Testis (tissue), 5 donors: ENCODE measurements at regions of chr2 and their contacts with region 1.

Region 1: GRCh38 chr2:74715078-74715791 is 61.2 kb downstream of the SEMA4F start:
- DNase-seq: peak; percentile 92
- H3K4me3 ChIP-seq: peak overlapping the region; percentile 54 to 73
- H3K27ac ChIP-seq: peak overlapping the region; percentile 65 to 83
- H3K4me1 ChIP-seq: no peaks in the 10 kb centered on the region
- H3K27me3 ChIP-seq: no peaks in the 10 kb centered on the region
- CTCF ChIP-seq: peak; percentile 88 to 93 (median 89)
- POLR2A ChIP-seq: no peak

Region 2: DNA sequence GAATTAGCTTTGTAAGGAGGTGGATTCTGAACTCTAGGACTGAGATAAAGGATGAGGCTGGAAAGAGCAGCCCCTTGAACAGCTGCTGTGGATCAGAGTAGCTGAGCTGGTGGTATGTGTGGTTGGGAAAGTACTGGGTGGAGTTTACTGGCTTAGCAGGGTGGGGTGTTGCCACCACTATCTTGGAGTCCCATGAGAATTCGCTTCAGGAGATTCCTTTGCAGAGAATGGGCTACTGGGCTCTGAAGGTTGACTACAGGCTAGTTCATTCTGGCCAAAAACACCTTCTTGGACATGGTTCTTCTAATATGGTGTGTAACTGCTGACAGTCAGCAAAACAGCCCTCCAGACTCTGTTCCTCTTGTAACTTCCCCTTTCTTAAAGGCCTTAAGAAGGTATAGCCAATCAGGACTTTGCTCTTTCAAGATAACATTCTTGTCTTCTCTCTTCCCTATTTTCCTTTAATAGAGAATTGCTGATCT is 677.8 kb before region 1 on chr2:
- intact Hi-C with region 1: no loop called
- DNase-seq: no peak
- H3K4me3 ChIP-seq: no peak overlapping the region
- H3K27ac ChIP-seq: no peak overlapping the region
- H3K4me1 ChIP-seq: peaks cover 3% of the 10 kb centered on the region
- H3K27me3 ChIP-seq: no peaks in the 10 kb centered on the region
- CTCF ChIP-seq: no peak
- POLR2A ChIP-seq: no peak

Region 3: DNA sequence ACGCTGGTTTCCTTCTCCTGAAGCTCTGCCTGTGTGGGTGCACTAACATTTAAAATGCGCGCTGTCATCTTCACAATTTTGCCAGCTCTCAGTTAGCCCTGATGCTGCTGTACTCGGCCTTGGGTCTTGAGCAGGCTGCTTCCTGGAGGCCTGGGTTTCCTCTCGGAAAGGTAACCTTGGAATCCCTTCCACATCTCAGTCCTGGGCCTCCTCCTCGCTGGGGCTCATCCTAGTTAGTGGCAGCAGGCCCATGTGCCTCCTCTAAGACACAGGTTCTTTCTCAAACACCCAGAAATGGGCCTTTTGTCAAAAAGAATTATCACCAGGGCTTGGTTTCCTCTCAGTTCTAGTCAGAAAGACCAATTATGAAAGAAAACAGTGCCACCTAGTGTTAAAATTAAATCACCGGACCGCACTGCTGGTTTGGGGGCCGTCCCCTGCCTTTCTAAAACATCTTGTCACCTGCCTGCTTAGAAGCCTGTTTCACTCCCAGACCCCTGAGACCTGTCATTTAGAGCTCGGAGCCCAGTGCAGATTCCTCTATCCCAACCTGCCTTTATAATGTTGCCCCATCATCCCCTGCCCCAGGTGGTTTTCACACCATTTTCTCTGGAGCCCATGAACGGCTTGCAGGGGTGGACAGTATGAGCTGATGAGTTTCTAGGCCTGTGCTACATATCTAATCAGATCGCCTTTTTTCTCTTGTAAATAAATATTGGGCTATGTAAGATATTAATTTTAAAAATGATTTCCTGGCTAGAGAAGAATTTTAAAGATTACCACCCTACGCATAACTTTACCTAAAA is 161.0 kb after region 1 on chr2:
- intact Hi-C with region 1: loop called (anchors 5 kb)
- DNase-seq: peak; percentile 42
- H3K4me3 ChIP-seq: no peak overlapping the region
- H3K27ac ChIP-seq: peak overlapping the region; percentile 35 to 84
- H3K4me1 ChIP-seq: peaks cover 48% of the 10 kb centered on the region
- H3K27me3 ChIP-seq: no peaks in the 10 kb centered on the region
- CTCF ChIP-seq: peak; percentile 59 to 74 (median 73)
- POLR2A ChIP-seq: no peak